Activated CD4-positive, alpha-beta T cell treated with anti-CD3 and anti-CD28 coated beads, Interleukin-2, amount 10 ng/mL, durations not matched to agents 24 days and 14 days (primary cell): ENCODE measurements at regions of chr3 and their contacts with region 1.

Region 1: GRCh38 chr3:4736284-4736861 is 242.9 kb upstream of the BHLHE40 start:
- DNase-seq: peak; percentile 70
- H3K4me3 Mint-ChIP-seq: peak overlapping the region; percentile 4
- H3K27ac Mint-ChIP-seq: peak overlapping the region; percentile 81
- H3K4me1 Mint-ChIP-seq: peaks cover 81% of the 10 kb centered on the region
- H3K27me3 Mint-ChIP-seq: no peaks in the 10 kb centered on the region

Region 2: DNA sequence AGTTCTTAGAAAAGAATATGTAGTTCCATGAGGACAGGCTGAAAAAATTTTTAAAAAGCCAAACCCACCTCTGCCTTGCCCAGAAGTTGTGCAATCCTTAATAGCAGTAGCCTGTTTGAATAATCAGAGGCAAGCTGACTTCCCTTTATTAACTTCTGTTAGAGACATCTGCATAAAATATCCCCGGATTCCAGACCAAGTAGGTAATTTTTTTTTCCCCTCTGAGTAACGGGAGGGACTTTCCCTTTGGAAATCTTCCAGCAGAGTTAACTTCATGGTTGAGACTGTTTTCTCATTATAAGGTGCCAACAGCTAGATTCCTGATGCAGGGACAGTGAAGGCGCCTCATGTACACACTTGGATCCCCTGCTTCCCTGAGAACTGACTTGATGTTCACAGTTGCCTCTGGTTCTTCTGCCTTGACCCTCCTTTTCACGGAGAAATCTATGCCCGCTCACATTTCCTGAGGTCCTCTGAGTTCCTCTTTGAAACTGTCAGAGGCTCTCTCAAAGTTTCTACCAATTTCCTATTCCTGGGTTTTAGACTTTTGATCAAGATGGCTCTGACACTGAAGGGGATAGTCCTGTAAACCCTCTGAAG is 15.2 kb after region 1 on chr3:
- intact Hi-C with region 1: loop called (anchors 2 kb)
- DNase-seq: no peak
- H3K4me3 Mint-ChIP-seq: peak overlapping the region; percentile 54
- H3K27ac Mint-ChIP-seq: peak overlapping the region; percentile 92
- H3K4me1 Mint-ChIP-seq: peaks cover 63% of the 10 kb centered on the region
- H3K27me3 Mint-ChIP-seq: no peaks in the 10 kb centered on the region